Activated naive CD4-positive, alpha-beta T cell treated with anti-CD3 and anti-CD28 coated beads for 36 hours (primary cell): ENCODE measurements at regions of chr21 and their contacts with region 1.

Region 1: DNA sequence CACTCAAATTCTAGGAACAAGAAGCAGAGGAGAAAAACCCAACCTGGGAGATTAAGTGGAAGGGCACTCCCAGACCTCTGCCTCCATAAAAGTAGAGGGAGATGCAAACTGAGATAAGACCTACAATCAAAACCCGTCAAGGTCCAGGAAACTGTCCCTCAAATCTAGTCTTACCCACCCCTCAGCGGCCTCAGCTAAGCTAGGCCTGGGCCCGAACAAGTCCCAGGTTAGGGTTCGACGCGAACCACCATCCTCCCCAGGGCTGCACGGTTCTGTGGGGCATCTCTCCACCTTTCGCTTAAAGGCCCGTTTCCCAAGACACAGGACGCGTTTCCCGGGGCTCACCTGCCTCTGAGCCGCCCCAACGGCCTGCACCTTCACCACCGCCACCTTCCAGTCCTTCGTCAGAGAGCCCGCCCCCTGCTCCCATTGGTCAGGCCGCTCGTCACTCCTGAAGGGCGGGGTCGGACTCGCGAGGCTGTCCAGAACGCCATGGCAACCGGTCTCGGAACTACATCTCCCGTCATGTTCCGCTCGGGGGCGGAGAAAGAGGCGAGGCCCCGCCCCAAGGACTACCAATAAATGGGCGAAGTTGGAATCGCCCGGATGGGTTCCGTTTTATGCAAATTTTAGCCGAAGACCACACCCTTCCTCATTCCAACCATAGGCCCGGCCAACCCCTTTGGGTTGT is at the start of gene CRYZL1:
- DNase-seq: peak; percentile 100
- H3K4me3 Mint-ChIP-seq: peak within 1 kb of the TSS; percentile 91
- H3K27ac Mint-ChIP-seq: peak within 1 kb of the TSS; percentile 94
- H3K4me1 Mint-ChIP-seq: peaks cover 21% of the 10 kb centered on the region
- H3K27me3 Mint-ChIP-seq: peaks cover 17% of the 10 kb centered on the region
- total RNA-seq, gene CRYZL1: 30.3 to 32.7 TPM

Region 2: GRCh38 chr21:33132054-33132453 is 509.4 kb before region 1 on chr21:
- CTCF ChIA-PET with region 1: no interaction called
- intact Hi-C with region 1: no loop called
- DNase-seq: no peak
- H3K4me3 Mint-ChIP-seq: no peak overlapping the region
- H3K27ac Mint-ChIP-seq: no peak overlapping the region
- H3K4me1 Mint-ChIP-seq: peaks cover 2% of the 10 kb centered on the region
- H3K27me3 Mint-ChIP-seq: no peaks in the 10 kb centered on the region

Region 3: GRCh38 chr21:33324291-33325221 is 316.9 kb before region 1 on chr21 and contains the start of gene IFNAR1:
- CTCF ChIA-PET with region 1: no interaction called
- intact Hi-C with region 1: loop called (anchors 1 kb)
- DNase-seq: peak; percentile 99
- H3K4me3 Mint-ChIP-seq: no peak within 1 kb of the TSS
- H3K27ac Mint-ChIP-seq: no peak within 1 kb of the TSS
- H3K4me1 Mint-ChIP-seq: peaks cover 28% of the 10 kb centered on the region
- H3K27me3 Mint-ChIP-seq: no peaks in the 10 kb centered on the region
- total RNA-seq, gene IFNAR1: 20.6 to 24.3 TPM

Region 4: GRCh38 chr21:33360881-33361602 is 280.4 kb before region 1 on chr21:
- CTCF ChIA-PET with region 1: no interaction called
- intact Hi-C with region 1: no loop called
- DNase-seq: peak; percentile 97
- H3K4me3 Mint-ChIP-seq: peak overlapping the region; percentile 86
- H3K27ac Mint-ChIP-seq: peak overlapping the region; percentile 95
- H3K4me1 Mint-ChIP-seq: peaks cover 17% of the 10 kb centered on the region
- H3K27me3 Mint-ChIP-seq: no peaks in the 10 kb centered on the region

Region 5: GRCh38 chr21:33491373-33492102 is 149.9 kb before region 1 on chr21 and contains the start of gene DNAJC28:
- CTCF ChIA-PET with region 1: no interaction called
- intact Hi-C with region 1: loop called (anchors 1 kb)
- DNase-seq: peak; percentile 92
- H3K4me3 Mint-ChIP-seq: peak within 1 kb of the TSS; percentile 99
- H3K27ac Mint-ChIP-seq: peak within 1 kb of the TSS; percentile 91
- H3K4me1 Mint-ChIP-seq: peaks cover 6% of the 10 kb centered on the region
- H3K27me3 Mint-ChIP-seq: no peaks in the 10 kb centered on the region
- total RNA-seq, gene DNAJC28: 0.17 TPM

Region 6: DNA sequence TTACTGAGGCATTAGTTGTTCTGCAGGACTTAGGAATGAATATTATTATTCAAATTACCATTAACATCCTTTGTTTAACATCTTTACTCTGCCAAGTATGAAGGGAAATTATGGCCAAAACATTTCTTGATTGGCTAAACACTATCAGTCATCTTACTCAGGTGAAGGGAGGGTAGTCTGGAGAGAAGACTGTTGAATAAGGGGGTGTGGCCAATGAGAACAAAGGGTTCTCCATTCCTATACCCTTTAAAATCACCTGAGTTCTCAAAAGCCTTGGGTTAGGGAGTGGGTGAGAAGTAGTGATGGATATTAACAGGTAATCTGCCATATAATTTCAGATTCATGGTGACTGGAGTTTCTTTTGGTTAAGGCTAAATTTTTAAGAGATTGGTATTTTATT is 19.2 kb before region 1 on chr21:
- CTCF ChIA-PET with region 1: no interaction called
- intact Hi-C with region 1: no loop called
- DNase-seq: no peak
- H3K4me3 Mint-ChIP-seq: no peak overlapping the region
- H3K27ac Mint-ChIP-seq: no peak overlapping the region
- H3K4me1 Mint-ChIP-seq: no peaks in the 10 kb centered on the region
- H3K27me3 Mint-ChIP-seq: no peaks in the 10 kb centered on the region

Region 7: GRCh38 chr21:33698087-33698860 is 56.8 kb after region 1 on chr21:
- CTCF ChIA-PET with region 1: no interaction called
- intact Hi-C with region 1: no loop called
- DNase-seq: no peak
- H3K4me3 Mint-ChIP-seq: no peak overlapping the region
- H3K27ac Mint-ChIP-seq: no peak overlapping the region
- H3K4me1 Mint-ChIP-seq: no peaks in the 10 kb centered on the region
- H3K27me3 Mint-ChIP-seq: no peaks in the 10 kb centered on the region

Region 8: GRCh38 chr21:33894736-33895288 is 253.3 kb after region 1 on chr21:
- CTCF ChIA-PET with region 1: no interaction called
- intact Hi-C with region 1: loop called (anchors 1 kb)
- DNase-seq: peak; percentile 80
- H3K4me3 Mint-ChIP-seq: peak overlapping the region; percentile 57
- H3K27ac Mint-ChIP-seq: no peak overlapping the region
- H3K4me1 Mint-ChIP-seq: peaks cover 11% of the 10 kb centered on the region
- H3K27me3 Mint-ChIP-seq: no peaks in the 10 kb centered on the region

Region 9: DNA sequence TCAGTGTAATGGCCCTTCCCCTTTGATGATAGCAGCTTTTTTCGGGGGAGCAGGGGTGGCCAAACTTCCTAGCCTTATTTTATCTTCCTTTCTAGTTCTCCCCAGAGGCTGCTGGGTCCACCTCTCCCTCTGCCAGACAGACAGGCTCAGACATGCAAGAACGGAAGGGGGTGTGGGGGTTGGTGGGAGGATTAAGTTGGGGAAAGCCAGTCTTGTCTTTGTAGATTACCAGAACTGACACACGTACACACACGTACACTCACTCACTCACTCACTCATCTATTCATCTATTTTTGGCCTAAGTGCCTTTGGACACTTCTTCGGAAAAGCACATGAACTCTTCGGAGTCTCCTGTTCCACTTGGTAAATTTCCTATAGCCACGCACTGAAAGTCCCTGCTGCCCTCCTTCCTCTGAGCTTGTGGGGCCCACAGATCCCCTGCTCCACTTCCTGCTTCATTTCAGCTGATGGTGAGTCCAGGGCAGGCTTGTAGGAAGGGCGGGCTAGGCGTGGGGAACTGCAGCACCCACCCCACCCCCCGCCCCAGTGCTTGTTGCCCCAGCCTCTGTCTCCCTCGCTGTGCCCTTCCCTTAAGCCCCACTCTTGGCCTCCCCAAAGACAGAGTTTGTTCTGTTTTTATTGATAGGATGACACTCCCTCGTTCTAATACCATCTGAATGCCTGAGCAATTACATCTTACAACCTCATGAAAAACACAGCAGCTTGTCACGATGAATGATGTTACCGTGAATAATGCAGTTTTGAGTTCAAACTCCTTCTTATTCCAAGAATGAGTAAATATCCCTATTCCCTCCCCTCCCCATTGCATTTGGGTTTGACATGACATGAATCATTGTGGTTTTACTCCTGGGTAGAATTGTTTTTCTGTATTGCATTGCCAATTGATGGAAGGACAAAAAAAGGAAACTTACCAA is 334.9 kb after region 1 on chr21:
- CTCF ChIA-PET with region 1: no interaction called
- intact Hi-C with region 1: loop called (anchors 5 kb)
- DNase-seq: peak; percentile 83
- H3K4me3 Mint-ChIP-seq: peak overlapping the region; percentile 70
- H3K27ac Mint-ChIP-seq: peak overlapping the region; percentile 99
- H3K4me1 Mint-ChIP-seq: peaks cover 52% of the 10 kb centered on the region
- H3K27me3 Mint-ChIP-seq: no peaks in the 10 kb centered on the region

Region 10: DNA sequence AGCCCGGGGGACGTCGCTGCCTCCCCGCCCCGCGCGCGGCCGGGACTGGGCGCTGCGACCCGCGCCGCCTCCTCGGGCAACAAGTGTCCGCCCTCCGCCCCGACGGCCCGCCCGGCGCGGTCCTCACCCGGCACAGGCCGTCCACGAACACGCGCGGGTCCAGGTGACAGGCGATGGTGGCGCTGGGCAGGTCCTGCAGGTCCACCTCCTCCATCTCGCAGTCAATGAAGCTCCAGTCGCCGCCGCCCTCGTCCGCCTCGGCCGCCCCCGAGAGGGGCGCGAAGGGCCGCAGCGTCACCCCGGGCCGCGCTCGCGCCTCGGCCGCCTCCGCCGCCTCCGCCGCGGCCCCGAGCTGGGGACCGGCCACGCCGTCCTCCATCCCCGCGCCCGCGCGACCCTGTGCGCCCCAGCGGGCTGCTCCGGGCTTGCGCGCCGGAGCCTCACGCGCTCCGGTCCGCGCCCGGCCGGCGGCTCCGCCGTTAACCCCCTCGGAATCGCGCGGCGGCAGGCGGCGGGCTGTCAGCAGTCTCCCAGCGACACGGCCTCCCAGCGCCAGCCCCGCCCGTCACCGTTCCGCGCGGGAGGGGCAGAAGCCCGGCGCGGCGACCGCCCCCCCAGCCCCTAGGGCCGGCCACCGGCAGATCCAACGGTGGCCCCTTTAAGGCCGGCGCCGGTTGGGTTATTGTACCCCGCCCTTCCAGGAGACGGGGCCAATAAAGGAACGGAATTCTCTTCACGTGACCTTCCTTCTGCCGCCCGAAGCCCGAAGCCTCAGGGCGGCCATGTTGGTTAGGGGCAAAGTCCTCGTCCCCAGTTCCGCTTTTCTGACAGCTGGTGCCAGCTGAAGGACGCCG is 973.4 kb after region 1 on chr21 and contains the start of gene RCAN1:
- CTCF ChIA-PET with region 1: no interaction called
- intact Hi-C with region 1: loop called (anchors 1 kb)
- DNase-seq: peak; percentile 90
- H3K4me3 Mint-ChIP-seq: peak within 1 kb of the TSS; percentile 84
- H3K27ac Mint-ChIP-seq: peak within 1 kb of the TSS; percentile 48
- H3K4me1 Mint-ChIP-seq: peaks cover 17% of the 10 kb centered on the region
- H3K27me3 Mint-ChIP-seq: no peaks in the 10 kb centered on the region
- total RNA-seq, gene RCAN1: 2.3 to 2.9 TPM